Tibial artery (tissue), 4 donors: ENCODE measurements at regions of chr11 and their contacts with region 1.

Region 1: GRCh38 chr11:130653838-130654636 is 205.6 kb downstream of the ADAMTS15 start:
- DNase-seq: peak; percentile 83 to 93
- H3K4me3 ChIP-seq: no peak overlapping the region
- H3K27ac ChIP-seq: peak overlapping the region; percentile 80 to 90
- H3K4me1 ChIP-seq: peaks cover 7 to 63% (median 49%) of the 10 kb centered on the region in 4 donors
- H3K27me3 ChIP-seq: no peaks in the 10 kb centered on the region
- CTCF ChIP-seq: no peak

Region 2: GRCh38 chr11:130609121-130610035 is 44.7 kb before region 1 on chr11:
- intact Hi-C with region 1: loop called (anchors 5 kb)
- DNase-seq: peak; percentile 98 to 99
- H3K4me3 ChIP-seq: peak overlapping the region; percentile 2 to 3
- H3K27ac ChIP-seq: peak overlapping the region; percentile 80 to 86
- H3K4me1 ChIP-seq: peaks cover 4 to 72% (median 52%) of the 10 kb centered on the region in 4 donors
- H3K27me3 ChIP-seq: no peaks in the 10 kb centered on the region
- CTCF ChIP-seq: no peak